Aorta (tissue), 5 donors: ENCODE measurements at regions of chr5 and their contacts with region 1.

Region 1: DNA sequence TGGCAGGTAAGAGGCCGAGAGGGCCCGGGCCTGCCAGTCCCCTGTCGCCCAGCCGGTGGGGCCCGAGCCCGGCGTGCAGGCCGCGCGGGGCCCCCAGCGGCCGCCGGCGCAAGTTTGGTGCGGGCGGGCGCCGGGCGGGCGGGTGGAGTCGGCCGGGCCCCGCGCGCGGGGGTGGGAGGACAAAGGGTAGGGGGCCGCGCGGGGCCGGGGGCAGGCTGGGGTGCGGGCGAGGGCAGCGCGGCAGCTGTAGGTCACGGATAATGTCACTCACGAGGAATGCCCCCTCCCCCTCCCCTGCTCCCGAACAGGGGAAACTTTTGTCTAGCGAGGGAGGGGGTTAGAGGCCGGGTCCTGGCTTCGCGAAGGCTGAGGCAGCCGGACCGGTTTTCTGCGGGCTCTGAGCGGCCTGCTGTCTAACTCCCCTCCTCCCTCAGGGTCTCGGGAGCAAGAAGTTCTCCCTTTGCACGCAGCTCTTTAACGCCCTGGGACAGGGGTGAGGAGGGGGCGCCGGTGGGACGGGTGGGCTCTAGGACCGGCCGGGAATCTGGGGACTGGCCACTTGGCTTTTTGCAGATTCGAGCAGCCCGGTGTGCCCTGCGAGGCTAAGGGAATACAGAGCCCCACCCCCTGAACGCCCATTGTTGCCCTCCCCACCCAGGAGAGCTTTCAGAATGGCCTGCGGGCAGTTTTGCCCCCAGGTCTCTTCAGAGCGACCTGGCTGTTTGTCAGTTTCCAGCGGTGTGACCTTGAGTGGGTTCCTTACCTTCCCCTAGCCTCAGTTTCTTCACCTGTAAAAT is 21.3 kb upstream of the NDST1 start:
- DNase-seq: peak; percentile 70 to 85
- ATAC-seq: peak; percentile 19
- H3K4me3 ChIP-seq: peak overlapping the region; percentile 70 to 92
- H3K27ac ChIP-seq: peak overlapping the region; percentile 62 to 99
- H3K4me1 ChIP-seq: peaks cover 12 to 20% of the 10 kb centered on the region in 2 donors
- H3K27me3 ChIP-seq: no peaks in the 10 kb centered on the region

Region 2: DNA sequence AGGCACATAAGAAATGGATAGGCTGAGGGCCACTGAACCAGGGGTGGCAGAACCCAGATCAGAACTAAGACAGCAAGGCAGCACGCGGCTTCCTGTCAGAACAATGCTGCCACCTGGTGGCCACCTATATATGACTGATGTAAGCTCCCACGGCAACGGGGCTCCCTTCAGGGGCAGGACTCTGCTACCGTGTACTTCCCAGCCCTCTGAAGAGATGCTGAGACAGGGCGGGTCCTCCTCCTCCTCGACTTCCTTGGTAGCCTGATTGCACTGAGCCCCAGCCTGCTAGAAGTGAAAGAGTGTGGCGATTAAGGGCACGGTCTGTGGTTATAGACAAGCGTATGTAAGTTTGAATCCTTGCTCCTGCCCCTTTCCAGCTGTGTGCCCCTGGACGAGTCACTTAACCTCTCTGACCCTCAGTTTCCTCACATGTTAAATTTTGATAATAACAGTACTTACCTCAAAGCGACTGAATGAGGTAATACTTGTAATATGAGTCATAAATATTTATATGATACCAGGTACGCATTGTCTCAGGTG is 50.4 kb before region 1 on chr5:
- intact Hi-C with region 1: no loop called
- DNase-seq: peak; percentile 92 to 93
- ATAC-seq: peak; percentile 91
- H3K4me3 ChIP-seq: no peak overlapping the region
- H3K27ac ChIP-seq: no peak overlapping the region
- H3K4me1 ChIP-seq: no peaks in the 10 kb centered on the region
- H3K27me3 ChIP-seq: no peaks in the 10 kb centered on the region

Region 3: GRCh38 chr5:150449517-150450339 is 36.9 kb before region 1 on chr5 and contains the start of gene RPS14:
- intact Hi-C with region 1: no loop called
- DNase-seq: peak; percentile 97 to 98
- ATAC-seq: peak; percentile 98
- H3K4me3 ChIP-seq: peak within 1 kb of the TSS; percentile 49 to 78
- H3K27ac ChIP-seq: peak within 1 kb of the TSS; percentile 49 to 79
- H3K4me1 ChIP-seq: peaks cover 0 to 1% of the 10 kb centered on the region in 2 donors
- H3K27me3 ChIP-seq: no peaks in the 10 kb centered on the region
- total RNA-seq, gene RPS14: 1,419 to 1,480 TPM

Region 4: GRCh38 chr5:150523472-150524350 is 37.1 kb after region 1 on chr5:
- intact Hi-C with region 1: loop called (anchors 5 kb)
- DNase-seq: no peak
- ATAC-seq: peak; percentile 70
- H3K4me3 ChIP-seq: no peak overlapping the region
- H3K27ac ChIP-seq: no peak overlapping the region
- H3K4me1 ChIP-seq: peaks cover 0 to 3% of the 10 kb centered on the region in 2 donors
- H3K27me3 ChIP-seq: no peaks in the 10 kb centered on the region

Region 5: GRCh38 chr5:150544611-150545219 is 58.1 kb after region 1 on chr5:
- intact Hi-C with region 1: loop called (anchors 1 to 10 kb)
- DNase-seq: peak; percentile 74 to 90
- ATAC-seq: peak; percentile 74
- H3K4me3 ChIP-seq: no peak overlapping the region
- H3K27ac ChIP-seq: peak overlapping the region; percentile 58 to 72
- H3K4me1 ChIP-seq: peaks cover 0 to 2% of the 10 kb centered on the region in 2 donors
- H3K27me3 ChIP-seq: no peaks in the 10 kb centered on the region

Region 6: DNA sequence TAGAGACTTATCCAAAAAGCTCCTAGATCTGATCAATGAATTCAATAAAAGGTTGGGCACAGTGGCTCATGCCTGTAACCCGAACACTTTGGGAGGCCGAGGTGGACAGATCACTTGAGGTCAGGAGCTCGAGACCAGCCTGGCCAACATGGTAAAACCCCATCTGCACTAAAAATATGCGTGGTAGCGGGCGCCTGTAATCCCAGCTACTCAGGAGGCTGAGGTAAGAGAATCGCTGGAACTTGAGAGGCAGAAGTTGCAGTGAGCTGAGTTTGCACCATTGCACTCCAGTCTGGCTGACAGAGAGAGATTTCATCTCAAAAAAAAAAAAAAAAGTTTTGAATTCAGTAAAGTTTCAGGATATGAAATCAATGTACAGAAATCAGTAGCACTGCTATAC is 252.3 kb after region 1 on chr5:
- intact Hi-C with region 1: no loop called
- DNase-seq: no peak
- ATAC-seq: no peak
- H3K4me3 ChIP-seq: no peak overlapping the region
- H3K27ac ChIP-seq: no peak overlapping the region
- H3K4me1 ChIP-seq: no peaks in the 10 kb centered on the region
- H3K27me3 ChIP-seq: no peaks in the 10 kb centered on the region